ENCODE measurements at regions of chr2 and their contacts with region 1.

Region 1: DNA sequence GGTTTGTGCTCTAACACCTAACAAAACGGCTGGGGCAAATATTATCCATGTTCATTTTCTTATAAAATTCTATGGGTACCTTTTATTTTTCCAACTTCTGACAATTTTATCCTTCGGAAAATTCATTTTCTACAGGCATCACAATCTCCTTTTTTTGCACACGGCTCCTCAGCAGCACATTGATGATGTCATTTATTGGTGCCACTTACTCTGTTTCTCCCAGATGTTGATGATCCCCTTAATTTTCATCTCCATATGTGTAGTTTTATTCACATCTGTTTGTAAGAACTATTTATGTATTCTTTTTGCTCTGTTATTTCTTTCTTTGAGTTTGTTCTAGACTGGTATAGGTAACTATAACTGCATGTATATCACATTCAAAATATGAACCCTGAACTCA is 1660.8 kb upstream of the DDX18 start:
- DNase-seq: no peak
- H3K4me3 ChIP-seq: no peak overlapping the region
- H3K27ac ChIP-seq: no peak overlapping the region
- H3K4me1 ChIP-seq: no peaks in the 10 kb centered on the region
- H3K27me3 ChIP-seq: no peaks in the 10 kb centered on the region
- CTCF ChIP-seq: no peak
- POLR2A ChIP-seq: no peak

Region 2: GRCh38 chr2:117674172-117674571 is 1520.4 kb after region 1 on chr2:
- intact Hi-C with region 1: loop called (anchors 5 kb)
- DNase-seq: no peak
- H3K4me3 ChIP-seq: no peak overlapping the region
- H3K27ac ChIP-seq: no peak overlapping the region
- H3K4me1 ChIP-seq: no peaks in the 10 kb centered on the region
- H3K27me3 ChIP-seq: no peaks in the 10 kb centered on the region
- CTCF ChIP-seq: no peak
- POLR2A ChIP-seq: no peak